Dorsolateral prefrontal cortex (tissue), 120 donors: ENCODE measurements at regions of chr1 and their contacts with region 1.

Region 1: GRCh38 chr1:219812491-219813203 is 115.7 kb downstream of the SLC30A10 start:
- DNase-seq: peak in 6 of 10 donors; percentile 6 to 66 (median 44)
- H3K4me3 ChIP-seq: peak overlapping the region in 18 of 59 donors; percentile 1 to 38 (median 20)
- H3K27ac ChIP-seq: peak overlapping the region in 14 of 59 donors; percentile 2 to 76 (median 32)
- H3K27me3 ChIP-seq: peaks cover 0 to 4% (median 0%) of the 10 kb centered on the region in 45 donors
- CTCF ChIP-seq: peak; percentile 74 to 98 (median 92)

Region 2: GRCh38 chr1:218330043-218330623 is 1482.5 kb before region 1 on chr1:
- intact Hi-C with region 1: loop called in 1 of 2 experiments (anchors 5 kb)
- DNase-seq: no peak
- H3K4me3 ChIP-seq: peak overlapping the region in 7 of 59 donors; percentile 15 to 45 (median 22)
- H3K27ac ChIP-seq: no peak overlapping the region
- H3K27me3 ChIP-seq: no peaks in the 10 kb centered on the region
- CTCF ChIP-seq: peak; percentile 58 to 94 (median 80)

Region 3: DNA sequence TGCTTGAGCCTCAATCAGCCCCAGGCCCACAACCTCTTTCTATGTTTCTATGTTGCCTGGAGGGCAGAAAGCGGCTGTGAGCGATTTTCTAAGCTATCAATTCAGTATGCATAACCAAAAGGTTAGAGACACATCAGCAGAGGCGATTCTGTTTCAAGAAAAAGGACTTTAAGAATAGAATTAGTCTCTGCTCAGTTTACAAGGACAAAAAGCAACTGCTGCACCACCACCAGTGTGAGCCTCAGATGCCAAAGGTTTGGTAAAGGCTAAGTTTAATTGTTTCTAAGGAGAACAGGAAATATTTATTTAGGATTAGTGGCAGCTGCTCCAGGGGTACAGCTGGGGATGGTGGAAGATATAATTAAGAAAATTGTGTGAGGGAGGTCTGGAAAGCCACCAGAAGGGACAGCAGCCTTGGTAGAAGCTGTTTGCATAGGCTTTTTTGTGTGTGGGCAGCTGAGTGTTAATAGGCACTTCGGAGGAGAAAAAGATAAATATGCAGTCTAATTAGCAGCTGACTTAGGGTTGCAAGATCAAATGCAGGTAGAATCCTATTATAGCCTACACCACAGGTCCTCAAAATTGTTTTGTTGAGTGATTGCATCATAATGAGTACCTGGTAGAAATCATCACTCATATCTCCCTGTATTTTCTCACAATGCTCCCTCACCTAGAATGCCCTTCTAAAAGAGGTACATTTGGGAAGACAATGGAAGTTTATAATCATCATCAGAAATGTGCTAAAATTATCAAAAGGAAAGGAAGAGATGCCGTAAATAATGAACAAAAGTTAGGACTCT is 235.5 kb before region 1 on chr1:
- intact Hi-C with region 1: loop called in 1 of 2 experiments (anchors 10 kb)
- DNase-seq: no peak
- H3K4me3 ChIP-seq: no peak overlapping the region
- H3K27ac ChIP-seq: no peak overlapping the region
- H3K27me3 ChIP-seq: no peaks in the 10 kb centered on the region
- CTCF ChIP-seq: no peak

Region 4: GRCh38 chr1:219587805-219588561 is 224.7 kb before region 1 on chr1:
- intact Hi-C with region 1: no loop called
- DNase-seq: no peak
- H3K4me3 ChIP-seq: no peak overlapping the region
- H3K27ac ChIP-seq: peak overlapping the region in 11 of 59 donors; percentile 8 to 50 (median 36)
- H3K27me3 ChIP-seq: no peaks in the 10 kb centered on the region
- CTCF ChIP-seq: no peak

Region 5: GRCh38 chr1:219773775-219774174 is 38.9 kb before region 1 on chr1:
- intact Hi-C with region 1: no loop called
- DNase-seq: no peak
- H3K4me3 ChIP-seq: no peak overlapping the region
- H3K27ac ChIP-seq: no peak overlapping the region
- H3K27me3 ChIP-seq: no peaks in the 10 kb centered on the region
- CTCF ChIP-seq: no peak